ENCODE measurements at regions of chr2 and their contacts with region 1.

Region 1: GRCh38 chr2:161857920-161858319 is 216.1 kb downstream of the DPP4 start:
- DNase-seq: no peak
- ATAC-seq: no peak
- H3K4me3 ChIP-seq: no peak overlapping the region
- H3K27ac ChIP-seq: no peak overlapping the region
- H3K4me1 ChIP-seq: no peaks in the 10 kb centered on the region
- H3K27me3 ChIP-seq: no peaks in the 10 kb centered on the region
- CTCF ChIP-seq: no peak
- EP300 ChIP-seq: no peak
- POLR2A ChIP-seq: no peak
- RAD21 ChIP-seq: no peak

Region 2: GRCh38 chr2:161775971-161776370 is 81.9 kb before region 1 on chr2:
- CTCF ChIA-PET with region 1: no interaction called
- POLR2A ChIA-PET with region 1: no interaction called
- in situ Hi-C with region 1: no loop called
- intact Hi-C with region 1: no loop called
- DNase-seq: no peak
- ATAC-seq: no peak
- H3K4me3 ChIP-seq: no peak overlapping the region
- H3K27ac ChIP-seq: no peak overlapping the region
- H3K4me1 ChIP-seq: no peaks in the 10 kb centered on the region
- H3K27me3 ChIP-seq: no peaks in the 10 kb centered on the region
- CTCF ChIP-seq: no peak
- EP300 ChIP-seq: no peak
- POLR2A ChIP-seq: no peak
- RAD21 ChIP-seq: no peak

Region 3: DNA sequence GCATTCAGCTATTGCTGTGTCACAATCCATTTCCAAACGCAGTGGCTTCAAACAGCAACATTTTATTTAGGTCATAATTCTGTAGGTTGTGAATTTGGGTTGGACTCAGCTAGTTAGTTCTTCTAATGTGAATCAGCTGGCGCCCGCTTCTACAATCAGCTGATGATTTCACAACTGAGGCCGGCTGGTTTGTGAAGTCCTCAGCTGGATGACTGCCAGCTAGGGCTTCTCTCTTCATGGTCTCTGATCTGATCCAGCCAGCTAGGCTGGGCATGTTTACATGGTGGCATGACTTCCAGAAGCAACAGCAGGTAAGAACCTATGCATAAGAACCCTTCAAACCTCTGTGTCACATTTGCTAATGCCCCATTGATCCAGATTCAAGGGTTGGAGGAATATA is 61.7 kb before region 1 on chr2:
- CTCF ChIA-PET with region 1: no interaction called
- POLR2A ChIA-PET with region 1: no interaction called
- in situ Hi-C with region 1: no loop called
- intact Hi-C with region 1: loop called (anchors 10 kb)
- DNase-seq: no peak
- ATAC-seq: no peak
- H3K4me3 ChIP-seq: no peak overlapping the region
- H3K27ac ChIP-seq: no peak overlapping the region
- H3K4me1 ChIP-seq: no peaks in the 10 kb centered on the region
- H3K27me3 ChIP-seq: no peaks in the 10 kb centered on the region
- CTCF ChIP-seq: no peak
- EP300 ChIP-seq: no peak
- POLR2A ChIP-seq: no peak
- RAD21 ChIP-seq: no peak

Measured in K562 (cell line).